ENCODE measurements at regions of chr12 and their contacts with region 1.

Region 1: GRCh38 chr12:130826149-130826801 is 12.8 kb downstream of the STX2 start:
- DNase-seq: peak; percentile 82
- H3K4me3 Mint-ChIP-seq: no peak overlapping the region
- H3K27ac Mint-ChIP-seq: no peak overlapping the region
- H3K4me1 Mint-ChIP-seq: peaks cover 13% of the 10 kb centered on the region
- H3K27me3 Mint-ChIP-seq: no peaks in the 10 kb centered on the region

Region 2: GRCh38 chr12:130121226-130122000 is 704.9 kb before region 1 on chr12:
- CTCF ChIA-PET with region 1: no interaction called
- POLR2A ChIA-PET with region 1: no interaction called
- intact Hi-C with region 1: no loop called
- DNase-seq: no peak
- H3K4me3 Mint-ChIP-seq: no peak overlapping the region
- H3K27ac Mint-ChIP-seq: no peak overlapping the region
- H3K4me1 Mint-ChIP-seq: no peaks in the 10 kb centered on the region
- H3K27me3 Mint-ChIP-seq: no peaks in the 10 kb centered on the region

Region 3: GRCh38 chr12:130537052-130537451 is 289.2 kb before region 1 on chr12:
- CTCF ChIA-PET with region 1: no interaction called
- POLR2A ChIA-PET with region 1: no interaction called
- intact Hi-C with region 1: no loop called
- DNase-seq: no peak
- H3K4me3 Mint-ChIP-seq: no peak overlapping the region
- H3K27ac Mint-ChIP-seq: no peak overlapping the region
- H3K4me1 Mint-ChIP-seq: no peaks in the 10 kb centered on the region
- H3K27me3 Mint-ChIP-seq: no peaks in the 10 kb centered on the region

Region 4: DNA sequence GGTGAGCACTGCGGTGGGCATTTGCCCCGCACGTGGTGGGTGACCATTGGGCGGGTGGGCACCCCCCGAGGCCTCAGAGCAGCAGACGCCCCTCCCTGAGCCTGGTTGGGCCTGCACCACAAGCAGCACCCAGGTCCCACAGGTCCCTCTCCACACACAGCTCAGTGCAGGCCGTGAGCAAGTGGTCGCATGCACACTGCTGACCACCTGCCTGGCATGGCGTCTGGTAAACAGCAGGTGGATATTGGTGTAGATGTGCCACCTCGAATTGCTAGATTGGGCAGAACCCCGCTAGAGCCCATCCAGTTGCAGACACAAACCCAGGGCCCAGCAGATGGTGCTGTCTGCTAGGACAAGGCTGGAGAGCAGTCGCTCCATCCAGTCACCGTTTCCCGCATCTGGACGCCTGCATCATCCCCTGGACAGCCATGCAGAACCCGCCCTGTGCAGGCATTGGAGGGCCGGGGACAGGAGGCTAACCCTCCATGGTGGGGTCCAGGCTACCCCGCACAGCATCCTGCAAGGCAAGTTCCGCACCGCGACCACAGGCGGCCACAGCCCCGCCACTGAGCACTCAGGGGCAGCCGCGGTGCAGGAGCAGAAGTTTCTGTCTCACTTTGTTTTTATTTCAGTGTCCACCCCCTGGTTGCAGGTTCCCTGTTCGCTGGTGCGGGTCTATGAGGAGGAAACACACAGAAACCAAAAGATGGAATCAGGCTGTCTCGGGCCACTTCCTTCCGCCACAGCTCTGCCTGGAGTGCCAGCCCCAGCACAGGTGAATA is 64.5 kb before region 1 on chr12:
- CTCF ChIA-PET with region 1: interaction called, 17 read pairs
- POLR2A ChIA-PET with region 1: no interaction called
- intact Hi-C with region 1: no loop called
- DNase-seq: peak; percentile 79
- H3K4me3 Mint-ChIP-seq: peak overlapping the region; percentile 66
- H3K27ac Mint-ChIP-seq: no peak overlapping the region
- H3K4me1 Mint-ChIP-seq: peaks cover 3% of the 10 kb centered on the region
- H3K27me3 Mint-ChIP-seq: peaks cover 4% of the 10 kb centered on the region

Region 5: GRCh38 chr12:130806574-130806973 is 19.7 kb before region 1 on chr12:
- CTCF ChIA-PET with region 1: no interaction called
- POLR2A ChIA-PET with region 1: no interaction called
- intact Hi-C with region 1: no loop called
- DNase-seq: no peak
- H3K4me3 Mint-ChIP-seq: no peak overlapping the region
- H3K27ac Mint-ChIP-seq: no peak overlapping the region
- H3K4me1 Mint-ChIP-seq: peaks cover 6% of the 10 kb centered on the region
- H3K27me3 Mint-ChIP-seq: no peaks in the 10 kb centered on the region

Region 6: DNA sequence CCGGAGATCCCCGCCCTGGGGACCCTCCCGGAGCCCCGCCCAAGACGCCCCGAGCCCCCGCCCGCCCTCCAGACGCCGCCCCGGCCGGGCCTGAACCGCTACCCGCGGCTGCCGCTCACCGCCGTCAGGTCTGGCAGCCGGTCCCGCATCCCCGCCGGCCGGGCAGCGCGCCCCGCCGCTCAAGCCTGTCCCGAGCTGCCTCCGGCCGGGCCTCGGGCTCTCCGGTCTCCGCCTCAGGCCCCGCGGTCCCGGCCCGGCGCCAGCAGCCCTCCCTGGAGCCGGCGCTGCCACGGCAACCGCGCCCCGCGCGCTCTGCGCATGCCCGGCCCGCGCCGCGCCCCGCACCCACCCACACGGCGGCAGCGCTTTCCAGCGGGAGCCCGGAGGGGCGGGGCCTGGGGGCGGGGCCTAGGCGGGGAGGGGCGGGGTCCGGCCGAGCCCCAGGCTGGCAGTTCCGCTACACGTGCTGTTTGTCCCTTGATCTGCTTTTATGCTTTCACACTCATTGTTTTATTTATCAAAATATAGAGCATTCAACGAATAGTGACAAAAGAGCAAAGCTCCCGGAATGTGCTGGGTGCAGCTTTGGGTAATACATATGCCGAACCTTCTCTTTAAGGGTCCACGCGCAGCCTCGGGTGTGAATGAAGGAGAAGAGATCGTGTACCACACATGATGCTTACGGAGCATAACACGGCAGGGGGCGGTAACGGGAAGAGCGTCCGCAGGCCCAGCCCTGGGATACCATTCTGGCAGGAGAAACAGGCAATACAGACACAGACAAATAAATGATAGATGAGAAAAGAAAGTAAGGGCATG is 12.9 kb after region 1 on chr12 and contains the start of gene STX2:
- CTCF ChIA-PET with region 1: interaction called, 37 read pairs
- POLR2A ChIA-PET with region 1: interaction called, 4 read pairs
- intact Hi-C with region 1: no loop called
- DNase-seq: peak; percentile 92
- H3K4me3 Mint-ChIP-seq: peak within 1 kb of the TSS; percentile 79
- H3K27ac Mint-ChIP-seq: peak within 1 kb of the TSS; percentile 46
- H3K4me1 Mint-ChIP-seq: peaks cover 35% of the 10 kb centered on the region
- H3K27me3 Mint-ChIP-seq: no peaks in the 10 kb centered on the region
- total RNA-seq, gene STX2: 18.1 to 22.8 TPM

Region 7: GRCh38 chr12:130846369-130846768 is 20.1 kb after region 1 on chr12:
- CTCF ChIA-PET with region 1: interaction called, 10 read pairs
- POLR2A ChIA-PET with region 1: no interaction called
- intact Hi-C with region 1: no loop called
- DNase-seq: no peak
- H3K4me3 Mint-ChIP-seq: no peak overlapping the region
- H3K27ac Mint-ChIP-seq: no peak overlapping the region
- H3K4me1 Mint-ChIP-seq: no peaks in the 10 kb centered on the region
- H3K27me3 Mint-ChIP-seq: no peaks in the 10 kb centered on the region

Region 8: DNA sequence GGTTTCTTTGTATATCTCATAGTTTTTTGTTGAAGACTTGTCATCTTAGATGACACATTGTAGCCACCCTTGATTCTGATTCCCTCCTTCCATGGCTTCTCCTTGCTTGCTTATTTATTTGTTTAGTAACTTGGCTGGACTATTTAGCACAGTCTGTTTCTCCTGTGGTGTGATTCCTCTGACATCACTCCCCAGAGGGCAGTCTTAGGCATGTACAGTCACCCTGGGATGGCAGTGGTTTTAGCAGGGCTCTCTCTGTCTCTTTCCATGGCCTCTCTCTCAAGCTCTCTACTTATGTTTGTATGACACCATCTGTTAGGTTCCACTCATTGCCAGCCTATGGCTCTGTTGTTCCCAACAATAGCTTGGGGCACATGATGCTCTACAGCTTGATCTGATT is 285.7 kb after region 1 on chr12:
- CTCF ChIA-PET with region 1: no interaction called
- POLR2A ChIA-PET with region 1: no interaction called
- intact Hi-C with region 1: no loop called
- DNase-seq: no peak
- H3K4me3 Mint-ChIP-seq: no peak overlapping the region
- H3K27ac Mint-ChIP-seq: no peak overlapping the region
- H3K4me1 Mint-ChIP-seq: peaks cover 2% of the 10 kb centered on the region
- H3K27me3 Mint-ChIP-seq: peaks cover 15% of the 10 kb centered on the region